ENCODE measurements at regions of chr6 and their contacts with region 1.

Region 1: DNA sequence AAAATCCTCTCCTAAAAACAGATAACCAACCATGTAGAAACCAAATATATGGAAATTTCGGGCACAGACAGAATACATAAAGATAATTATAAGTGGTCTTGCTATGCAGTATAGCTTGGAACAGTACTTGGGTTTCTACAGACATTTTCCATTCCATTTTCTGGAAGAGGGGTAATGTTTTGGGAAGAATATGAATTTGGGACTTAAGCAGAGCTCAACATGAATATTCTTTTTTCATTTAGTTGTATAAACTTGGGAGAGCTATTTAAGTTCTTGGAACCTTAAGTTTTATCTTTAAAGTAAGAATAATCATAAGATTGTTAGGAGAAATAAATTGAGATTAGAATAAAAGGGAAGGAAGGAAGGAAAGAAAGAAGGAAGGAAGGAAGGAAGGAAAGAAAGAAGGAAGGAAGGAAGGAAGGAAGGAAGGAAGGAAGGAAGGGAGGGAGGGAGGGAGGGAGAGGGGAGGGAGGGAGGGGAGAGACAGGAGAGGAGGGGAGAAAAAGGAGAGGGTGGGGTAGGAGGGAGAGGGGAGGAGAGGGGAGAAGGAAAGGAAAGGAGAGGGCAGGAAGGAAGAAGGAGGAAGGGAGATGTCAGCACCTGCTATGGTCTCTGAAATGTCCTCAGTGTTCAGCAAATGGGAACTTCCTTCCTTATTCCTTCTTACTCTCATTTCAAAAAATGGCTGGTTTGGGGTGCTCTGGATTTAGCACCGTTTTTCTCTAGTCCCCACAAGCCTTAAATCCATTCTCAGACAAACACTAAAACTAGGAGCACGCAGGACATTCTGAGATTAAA is 248.3 kb downstream of the LY86 start:
- DNase-seq: no peak
- H3K4me3 ChIP-seq: no peak overlapping the region
- H3K27me3 ChIP-seq: peaks cover 3% of the 10 kb centered on the region; the same call in 1 of the 2 replicates
- CTCF ChIP-seq: no peak

Region 2: DNA sequence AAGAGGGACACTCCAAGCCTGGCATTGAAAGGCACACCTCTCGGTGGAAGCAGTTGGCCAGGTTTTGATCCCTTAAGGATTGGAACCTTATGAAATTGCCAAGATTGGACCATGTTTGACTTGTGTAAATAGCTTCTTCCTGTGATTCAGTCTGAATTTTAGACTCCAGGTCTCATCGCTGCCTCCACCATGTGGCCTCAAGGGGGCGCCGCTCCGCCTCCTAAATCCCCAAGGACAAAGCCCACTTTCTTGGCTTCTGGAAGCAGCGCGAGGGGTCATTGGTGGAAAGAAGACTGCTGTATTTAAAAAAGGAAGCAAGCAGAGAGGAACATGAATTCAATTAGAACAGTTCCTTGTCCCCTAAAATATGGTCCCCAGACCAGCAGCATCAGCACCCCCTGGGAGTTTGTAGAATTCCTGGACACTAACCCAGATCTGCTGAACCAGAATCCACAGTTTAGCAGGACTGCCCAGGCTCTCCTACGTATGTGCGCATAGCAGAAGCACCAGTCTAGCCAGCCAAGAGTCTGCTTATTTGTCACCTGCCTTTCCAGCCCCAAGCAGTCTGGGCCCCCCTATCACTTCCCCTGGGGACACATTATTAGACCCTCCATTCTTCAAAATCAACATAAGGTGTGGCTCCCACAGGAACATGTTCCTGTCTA is 139.8 kb before region 1 on chr6:
- CTCF ChIA-PET with region 1: no interaction called
- POLR2A ChIA-PET with region 1: no interaction called
- DNase-seq: no peak
- H3K4me3 ChIP-seq: no peak overlapping the region
- H3K27me3 ChIP-seq: no peaks in the 10 kb centered on the region
- CTCF ChIP-seq: peak; percentile 76

Region 3: GRCh38 chr6:6736791-6737654 is 99.8 kb before region 1 on chr6:
- CTCF ChIA-PET with region 1: no interaction called
- POLR2A ChIA-PET with region 1: no interaction called
- DNase-seq: peak; percentile 82
- H3K4me3 ChIP-seq: peak overlapping the region; percentile 36
- H3K27me3 ChIP-seq: no peaks in the 10 kb centered on the region; the same call in 1 of the 2 replicates
- CTCF ChIP-seq: no peak

Region 4: GRCh38 chr6:6856538-6857523 is 20.0 kb after region 1 on chr6:
- CTCF ChIA-PET with region 1: no interaction called
- POLR2A ChIA-PET with region 1: interaction called, 14 read pairs
- DNase-seq: no peak
- H3K4me3 ChIP-seq: no peak overlapping the region
- H3K27me3 ChIP-seq: no peaks in the 10 kb centered on the region
- CTCF ChIP-seq: no peak

Region 5: GRCh38 chr6:7292596-7293255 is 455.9 kb after region 1 on chr6:
- CTCF ChIA-PET with region 1: no interaction called
- POLR2A ChIA-PET with region 1: no interaction called
- DNase-seq: no peak
- H3K4me3 ChIP-seq: no peak overlapping the region
- H3K27me3 ChIP-seq: no peaks in the 10 kb centered on the region
- CTCF ChIP-seq: no peak